Vagina (tissue), 2 donors: ENCODE measurements at regions of chr9 and their contacts with region 1.

Region 1: GRCh38 chr9:21334701-21335632 is at the start of gene KLHL9:
- DNase-seq: no peak
- H3K4me3 ChIP-seq: peak within 1 kb of the TSS; percentile 84 to 90
- H3K27ac ChIP-seq: peak within 1 kb of the TSS; percentile 94
- H3K4me1 ChIP-seq: peaks cover 45% of the 10 kb centered on the region
- H3K27me3 ChIP-seq: no peaks in the 10 kb centered on the region
- CTCF ChIP-seq: no peak
- POLR2A ChIP-seq: peak in 1 of 2 donors; percentile 47
- total RNA-seq, gene KLHL9: 22.3 TPM

Region 2: GRCh38 chr9:20914556-20914955 is 420.4 kb before region 1 on chr9:
- intact Hi-C with region 1: no loop called
- DNase-seq: no peak
- H3K4me3 ChIP-seq: no peak overlapping the region
- H3K27ac ChIP-seq: no peak overlapping the region
- H3K4me1 ChIP-seq: no peaks in the 10 kb centered on the region
- H3K27me3 ChIP-seq: no peaks in the 10 kb centered on the region
- CTCF ChIP-seq: no peak
- POLR2A ChIP-seq: no peak

Region 3: DNA sequence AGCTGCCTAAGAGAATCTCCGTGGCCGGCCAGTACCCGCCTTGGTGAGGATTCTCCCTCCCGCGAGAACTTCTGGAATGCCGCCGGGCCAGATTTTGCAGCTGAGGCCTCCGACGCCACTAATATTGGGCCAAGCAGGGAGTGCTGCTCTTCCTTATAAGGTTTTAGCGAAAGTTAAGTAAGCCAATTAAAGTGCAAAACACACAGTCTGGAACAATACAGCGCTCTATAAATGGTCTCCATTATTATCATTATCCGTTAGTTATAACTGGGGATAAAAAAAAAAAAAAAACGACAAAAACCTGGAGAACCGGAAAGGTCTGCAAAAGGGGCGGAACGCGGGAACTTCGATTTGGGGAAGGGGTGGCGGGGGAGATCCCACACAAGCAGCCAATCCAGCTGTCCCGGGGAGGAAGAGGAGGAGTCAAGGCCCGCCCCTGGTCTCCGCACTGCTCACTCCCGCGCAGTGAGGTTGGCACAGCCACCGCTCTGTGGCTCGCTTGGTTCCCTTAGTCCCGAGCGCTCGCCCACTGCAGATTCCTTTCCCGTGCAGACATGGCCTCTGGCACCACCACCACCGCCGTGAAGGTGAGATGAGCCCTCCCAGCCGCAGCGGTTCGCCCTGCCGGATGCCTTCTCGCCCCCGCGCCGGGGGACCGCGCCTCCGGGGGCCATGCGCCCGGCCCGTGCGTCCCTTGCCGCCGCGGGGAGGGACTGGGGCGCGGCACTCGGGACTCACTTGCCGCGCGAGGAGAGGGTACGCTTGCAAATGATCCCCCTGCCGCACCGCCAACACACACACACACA is 467.4 kb after region 1 on chr9 and contains the start of gene MTAP:
- intact Hi-C with region 1: loop called (anchors 10 kb)
- DNase-seq: peak in 1 of 2 donors; percentile 95
- H3K4me3 ChIP-seq: peak within 1 kb of the TSS; percentile 69 to 86
- H3K27ac ChIP-seq: peak within 1 kb of the TSS; percentile 85
- H3K4me1 ChIP-seq: peaks cover 48% of the 10 kb centered on the region
- H3K27me3 ChIP-seq: no peaks in the 10 kb centered on the region
- CTCF ChIP-seq: no peak
- POLR2A ChIP-seq: peak in 1 of 2 donors; percentile 82
- total RNA-seq, gene MTAP: 19.9 TPM

Region 4: GRCh38 chr9:23117616-23118015 is 1782.6 kb after region 1 on chr9:
- intact Hi-C with region 1: no loop called
- DNase-seq: no peak
- H3K4me3 ChIP-seq: no peak overlapping the region
- H3K27ac ChIP-seq: no peak overlapping the region
- H3K4me1 ChIP-seq: no peaks in the 10 kb centered on the region
- H3K27me3 ChIP-seq: no peaks in the 10 kb centered on the region
- CTCF ChIP-seq: no peak
- POLR2A ChIP-seq: no peak